GM10248 (cell line): ENCODE measurements at regions of chr3 and their contacts with region 1.

Region 1: DNA sequence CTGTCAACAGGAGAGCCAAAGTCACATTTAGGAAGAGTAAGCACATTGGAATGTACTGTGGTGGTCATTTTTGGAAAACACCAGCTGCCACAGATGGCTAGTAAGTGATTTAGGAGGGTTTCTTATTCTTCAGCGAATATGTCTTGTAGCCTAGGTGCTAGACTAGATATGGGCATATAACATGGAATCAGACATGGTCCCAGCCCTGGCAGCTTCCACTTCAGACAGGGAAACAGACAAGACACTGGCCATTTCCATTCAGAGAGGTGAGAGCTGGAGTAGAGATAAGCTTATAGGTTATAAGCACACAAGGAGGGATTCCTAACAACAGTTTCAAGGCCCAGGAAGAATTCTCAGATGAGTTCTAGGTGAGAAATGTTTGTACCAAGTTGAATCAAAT is 28.2 kb upstream of the BFSP2 start:
- DNase-seq: no peak
- CTCF ChIP-seq: no peak

Region 2: DNA sequence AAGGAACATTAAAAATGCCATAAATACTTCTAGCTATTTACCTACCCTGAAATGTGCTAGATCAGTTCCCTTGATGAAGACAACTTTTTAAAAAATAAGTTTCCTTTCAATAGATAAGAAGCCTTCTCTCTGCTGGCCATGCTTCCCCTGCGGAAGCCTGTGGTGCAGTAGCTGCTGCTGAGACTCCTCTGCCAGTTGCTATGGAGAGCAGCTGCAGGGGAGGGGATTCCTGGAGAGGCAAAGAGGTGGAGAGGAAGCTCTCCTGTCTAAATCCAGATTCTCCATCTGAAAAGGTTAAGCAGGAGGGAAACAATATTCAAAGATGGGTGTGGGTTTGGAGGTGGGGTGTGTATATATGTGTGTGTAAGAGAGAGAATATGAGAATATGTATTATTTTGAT is 41.6 kb before region 1 on chr3:
- CTCF ChIA-PET with region 1: no interaction called
- POLR2A ChIA-PET with region 1: no interaction called
- DNase-seq: no peak
- CTCF ChIP-seq: no peak

Region 3: DNA sequence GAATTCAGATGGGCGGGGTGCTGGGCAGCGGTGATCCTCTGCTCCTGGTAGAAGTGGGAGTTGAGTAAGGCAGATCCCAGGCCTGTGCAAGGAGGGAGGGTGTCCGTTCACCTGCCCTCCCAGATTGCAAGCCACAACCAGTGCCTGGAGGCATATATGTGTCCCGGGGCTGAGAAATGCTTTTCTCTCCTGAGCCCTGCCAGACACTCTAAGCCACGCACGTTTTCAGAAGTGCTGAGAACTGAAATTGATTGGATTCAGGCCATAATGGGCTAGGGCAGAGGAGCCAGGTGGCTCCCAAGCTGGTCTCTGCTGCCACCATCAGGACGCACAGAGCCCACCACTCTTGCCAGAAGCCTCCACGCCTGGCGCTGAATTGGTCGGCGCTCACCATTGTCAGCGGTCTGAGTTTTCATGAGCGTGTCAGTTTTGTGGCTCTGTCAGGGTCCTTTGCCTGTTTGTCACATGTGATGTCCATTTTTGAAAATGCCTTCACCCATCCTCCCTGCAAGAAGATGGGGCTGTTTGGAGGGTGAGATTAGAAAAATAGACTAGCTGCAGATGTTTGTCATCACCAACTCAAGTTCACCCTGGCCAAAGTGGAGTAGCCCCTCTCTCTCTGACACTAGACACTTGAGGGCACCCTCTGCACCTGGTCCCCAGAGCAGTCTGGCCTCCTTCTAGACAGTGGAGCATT is 12.8 kb after region 1 on chr3:
- CTCF ChIA-PET with region 1: interaction called, 14 read pairs
- POLR2A ChIA-PET with region 1: no interaction called
- DNase-seq: peak; percentile 61
- CTCF ChIP-seq: peak; percentile 64